ENCODE measurements at regions of chr14 and their contacts with region 1.

Region 1: GRCh38 chr14:57268161-57269069 is at the starts of genes AP5M1 and EXOC5:
- DNase-seq: peak; percentile 92
- H3K4me3 Mint-ChIP-seq: peak within 1 kb of the TSS; percentile 99
- H3K27ac Mint-ChIP-seq: peak within 1 kb of the TSS; percentile 100
- H3K4me1 Mint-ChIP-seq: peaks cover 60% of the 10 kb centered on the region
- H3K27me3 Mint-ChIP-seq: no peaks in the 10 kb centered on the region
- total RNA-seq, gene AP5M1: 38.7 and 48.2 TPM in 2 replicates
- total RNA-seq, gene EXOC5: 75.9 and 76.6 TPM in 2 replicates

Region 2: GRCh38 chr14:57060276-57060955 is 208.0 kb before region 1 on chr14:
- intact Hi-C with region 1: loop called (anchors 1 kb)
- DNase-seq: peak; percentile 9
- H3K4me3 Mint-ChIP-seq: peak overlapping the region; percentile 37
- H3K27ac Mint-ChIP-seq: peak overlapping the region; percentile 85
- H3K4me1 Mint-ChIP-seq: peaks cover 48% of the 10 kb centered on the region
- H3K27me3 Mint-ChIP-seq: peaks cover 15% of the 10 kb centered on the region

Region 3: GRCh38 chr14:57232006-57232405 is 36.4 kb before region 1 on chr14:
- intact Hi-C with region 1: loop called (anchors 5 kb)
- DNase-seq: no peak
- H3K4me3 Mint-ChIP-seq: no peak overlapping the region
- H3K27ac Mint-ChIP-seq: no peak overlapping the region
- H3K4me1 Mint-ChIP-seq: peaks cover 8% of the 10 kb centered on the region
- H3K27me3 Mint-ChIP-seq: no peaks in the 10 kb centered on the region